GM12878 (cell line): ENCODE measurements at regions of chr18 and their contacts with region 1.

Region 1: DNA sequence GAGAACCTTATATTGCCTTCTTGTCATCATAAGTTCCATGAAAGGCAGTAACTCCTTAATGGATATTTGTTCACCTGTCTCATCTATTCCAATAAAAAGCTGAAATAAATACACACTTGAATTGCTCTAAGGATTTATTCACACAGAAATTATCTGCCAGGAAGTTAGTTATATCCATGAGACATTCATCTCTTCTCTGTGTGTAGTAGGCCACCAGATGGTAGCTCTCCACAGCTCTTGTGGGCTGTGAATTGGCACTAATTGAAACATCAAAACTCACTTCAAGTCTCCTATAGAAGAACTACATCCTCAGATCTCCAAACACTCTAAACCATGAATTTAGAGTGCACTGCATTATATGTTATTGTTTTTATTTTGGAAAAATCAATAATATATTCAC is 189.6 kb downstream of the DSC3 start:
- DNase-seq: no peak
- ATAC-seq: no peak
- H3K4me3 ChIP-seq: no peak overlapping the region
- H3K27ac ChIP-seq: no peak overlapping the region
- H3K4me1 ChIP-seq: no peaks in the 10 kb centered on the region
- H3K27me3 ChIP-seq: no peaks in the 10 kb centered on the region
- CTCF ChIP-seq: no peak
- EP300 ChIP-seq: no peak
- POLR2A ChIP-seq: no peak
- RAD21 ChIP-seq: no peak

Region 2: GRCh38 chr18:31750273-31750672 is 897.3 kb after region 1 on chr18:
- CTCF ChIA-PET with region 1: no interaction called
- POLR2A ChIA-PET with region 1: no interaction called
- RAD21 ChIA-PET with region 1: no interaction called
- SMC1A ChIA-PET with region 1: no interaction called
- in situ Hi-C with region 1: no loop called
- intact Hi-C with region 1: loop called (anchors 10 kb)
- DNase-seq: no peak
- ATAC-seq: no peak
- H3K4me3 ChIP-seq: no peak overlapping the region
- H3K27ac ChIP-seq: no peak overlapping the region
- H3K4me1 ChIP-seq: no peaks in the 10 kb centered on the region
- H3K27me3 ChIP-seq: no peaks in the 10 kb centered on the region
- CTCF ChIP-seq: no peak
- EP300 ChIP-seq: no peak
- POLR2A ChIP-seq: no peak
- RAD21 ChIP-seq: no peak